ENCODE measurements at regions of chr5 and their contacts with region 1.

Region 1: DNA sequence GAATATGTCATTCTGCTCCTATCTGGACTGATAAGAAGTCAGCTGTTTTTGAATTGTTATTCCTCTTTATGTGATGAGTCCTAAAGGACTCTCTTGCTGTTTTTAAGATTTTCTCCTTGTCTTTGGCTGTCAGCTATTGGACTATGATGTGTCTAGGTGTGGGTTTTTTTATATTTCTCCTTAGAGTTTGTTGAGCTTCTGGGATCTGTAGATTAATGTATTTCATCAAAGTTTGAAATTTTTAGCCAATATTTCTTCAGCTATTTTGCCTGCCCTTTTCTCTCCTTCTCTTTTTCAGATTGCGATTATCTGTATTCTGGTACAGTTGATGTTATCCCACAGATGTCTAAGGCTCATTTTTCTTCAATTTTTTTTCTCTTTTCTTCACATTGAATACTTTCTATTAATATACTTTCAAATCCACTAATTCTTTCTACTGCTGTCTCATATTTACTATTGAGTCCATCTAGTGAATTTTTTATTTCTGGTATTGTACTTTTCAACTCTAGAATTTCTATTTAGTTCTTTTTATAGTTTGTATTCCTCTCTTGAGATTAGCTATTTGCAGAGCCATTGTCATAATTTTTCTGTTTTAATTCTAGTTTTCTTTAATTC is 31.1 kb downstream of the RPS23 start:
- DNase-seq: no peak
- H3K4me3 ChIP-seq: no peak overlapping the region
- H3K27ac ChIP-seq: no peak overlapping the region
- H3K4me1 ChIP-seq: no peaks in the 10 kb centered on the region
- H3K27me3 ChIP-seq: no peaks in the 10 kb centered on the region
- CTCF ChIP-seq: no peak
- POLR2A ChIP-seq: no peak

Region 2: DNA sequence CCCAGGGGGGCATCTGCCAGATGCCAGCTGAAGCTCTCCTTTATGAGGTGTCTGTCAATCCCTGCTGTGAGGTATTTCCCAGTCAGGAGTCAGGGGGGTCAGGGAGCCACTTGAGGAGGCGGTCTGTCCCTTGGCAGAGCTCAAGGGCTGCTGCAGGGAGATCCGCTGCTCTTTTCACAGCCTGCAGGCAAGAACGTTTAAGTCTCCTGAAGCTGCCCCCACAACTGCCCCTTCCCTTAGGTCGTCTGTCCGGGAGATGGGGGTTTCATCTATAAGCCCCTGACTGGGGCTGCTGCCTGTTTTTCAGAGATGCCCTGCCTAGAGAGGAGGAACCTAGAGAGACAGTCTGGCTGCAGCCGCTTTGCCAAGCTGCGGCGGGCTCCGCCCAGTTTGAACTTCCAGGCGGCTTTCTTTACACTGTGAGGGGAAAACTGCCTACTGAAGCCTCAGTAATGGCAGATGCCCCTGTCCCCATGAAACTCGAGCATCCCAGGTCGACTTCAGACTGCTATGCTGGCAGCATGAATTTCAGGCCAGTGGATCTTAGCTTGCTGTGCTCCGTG is 117.3 kb before region 1 on chr5:
- CTCF ChIA-PET with region 1: no interaction called
- POLR2A ChIA-PET with region 1: no interaction called
- dilution Hi-C with region 1: no loop called
- intact Hi-C with region 1: no loop called
- DNase-seq: no peak
- H3K4me3 ChIP-seq: no peak overlapping the region
- H3K27ac ChIP-seq: no peak overlapping the region
- H3K4me1 ChIP-seq: no peaks in the 10 kb centered on the region
- H3K27me3 ChIP-seq: no peaks in the 10 kb centered on the region
- CTCF ChIP-seq: no peak
- POLR2A ChIP-seq: no peak

Region 3: DNA sequence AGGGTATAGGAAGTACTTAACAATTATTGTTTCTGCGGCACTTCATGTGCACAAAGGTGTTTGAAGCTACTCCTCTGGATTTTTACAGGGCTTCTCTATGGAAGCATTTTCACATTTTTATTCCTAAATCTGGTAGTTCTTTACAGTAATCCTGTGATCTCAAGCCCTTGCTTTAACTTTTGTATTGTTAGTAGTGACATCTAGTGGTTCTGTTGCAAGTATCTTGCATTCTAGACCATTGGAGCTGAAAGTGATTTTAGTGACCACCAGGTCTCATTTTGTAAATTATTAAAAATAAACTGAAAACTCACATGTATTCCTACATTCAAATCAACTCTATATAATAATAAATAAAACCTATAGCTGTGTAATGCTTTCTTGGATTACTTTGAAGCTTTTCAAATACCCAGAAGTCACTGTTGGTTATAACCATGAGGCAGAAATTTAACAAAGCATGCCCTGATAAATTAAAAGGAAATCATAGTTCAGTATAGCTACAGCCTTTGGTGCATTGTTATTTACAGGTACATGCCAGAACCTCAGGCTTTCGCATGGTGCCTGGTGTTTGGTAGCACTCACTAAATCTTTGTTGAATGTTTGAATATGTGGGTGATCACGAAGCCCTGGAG is 12.2 kb after region 1 on chr5:
- CTCF ChIA-PET with region 1: interaction called, 18 read pairs
- POLR2A ChIA-PET with region 1: no interaction called
- dilution Hi-C with region 1: no loop called
- intact Hi-C with region 1: no loop called
- DNase-seq: peak; percentile 45
- H3K4me3 ChIP-seq: no peak overlapping the region
- H3K27ac ChIP-seq: no peak overlapping the region
- H3K4me1 ChIP-seq: no peaks in the 10 kb centered on the region
- H3K27me3 ChIP-seq: no peaks in the 10 kb centered on the region
- CTCF ChIP-seq: peak; percentile 25 to 27
- POLR2A ChIP-seq: no peak

Measured in endothelial cell of umbilical vein (primary cell).